SK-N-SH (cell line): ENCODE measurements at regions of chr10 and their contacts with region 1.

Region 1: DNA sequence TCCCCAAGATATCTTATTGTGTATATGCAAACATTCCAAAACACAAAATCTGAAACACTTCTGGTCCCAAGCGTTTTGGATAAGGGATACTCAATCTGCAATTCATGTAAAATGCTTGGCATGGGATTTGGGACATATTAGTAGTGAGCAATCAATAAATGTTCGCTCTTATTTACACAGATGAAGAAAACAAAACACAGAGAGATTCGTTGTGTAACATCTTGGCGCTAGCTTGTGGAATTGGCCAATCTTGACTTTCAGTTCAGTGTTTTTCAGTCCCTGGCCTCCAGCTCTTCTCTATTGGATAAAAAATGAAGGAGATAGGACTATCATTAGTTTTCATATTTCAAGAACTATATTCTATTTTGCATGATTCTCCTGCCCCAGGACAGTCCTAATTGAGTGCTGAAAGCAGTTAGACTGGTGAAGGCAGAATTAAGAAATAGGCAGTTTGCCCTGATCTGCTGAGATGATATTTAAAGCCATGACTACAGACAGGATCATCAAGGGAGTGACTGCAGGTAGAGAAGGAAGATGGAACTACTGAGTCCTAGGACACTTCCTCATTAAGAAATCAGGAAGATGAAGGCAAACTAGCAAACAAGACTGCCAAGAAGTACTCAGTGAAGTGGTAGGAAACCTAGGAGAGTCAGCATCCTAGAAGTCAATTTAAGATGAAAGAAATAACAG is 1.8 kb downstream of the PNLIPRP3 start:
- DNase-seq: no peak
- H3K4me3 ChIP-seq: no peak overlapping the region
- H3K27ac ChIP-seq: no peak overlapping the region
- H3K4me1 ChIP-seq: no peaks in the 10 kb centered on the region
- H3K27me3 ChIP-seq: no peaks in the 10 kb centered on the region
- CTCF ChIP-seq: no peak
- EP300 ChIP-seq: no peak
- RAD21 ChIP-seq: no peak

Region 2: DNA sequence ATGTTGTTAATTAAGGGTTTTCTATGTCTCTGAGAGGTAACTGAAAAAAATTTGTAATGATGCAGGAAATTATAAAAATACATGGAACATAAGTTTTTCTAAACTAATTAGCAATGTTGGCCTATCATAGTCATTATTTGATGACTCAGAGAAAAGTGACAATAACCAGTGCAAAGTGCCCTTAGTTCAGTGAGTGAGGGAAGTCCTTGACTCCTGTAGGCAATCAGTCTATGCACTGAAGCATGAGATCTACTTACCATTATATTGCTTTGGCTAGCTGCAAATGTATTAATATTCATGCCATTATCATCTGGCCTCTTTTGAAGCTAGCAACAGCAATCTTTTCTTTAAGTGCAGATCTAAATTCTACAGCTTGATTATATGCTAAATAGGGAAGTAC is 64.6 kb before region 1 on chr10:
- CTCF ChIA-PET with region 1: no interaction called
- POLR2A ChIA-PET with region 1: no interaction called
- DNase-seq: no peak
- H3K4me3 ChIP-seq: no peak overlapping the region
- H3K27ac ChIP-seq: no peak overlapping the region
- H3K4me1 ChIP-seq: no peaks in the 10 kb centered on the region
- H3K27me3 ChIP-seq: no peaks in the 10 kb centered on the region
- CTCF ChIP-seq: no peak
- EP300 ChIP-seq: no peak
- RAD21 ChIP-seq: no peak

Region 3: GRCh38 chr10:116444527-116445142 is 15.2 kb after region 1 on chr10:
- CTCF ChIA-PET with region 1: interaction called, 21 read pairs
- POLR2A ChIA-PET with region 1: no interaction called
- DNase-seq: peak; percentile 49
- H3K4me3 ChIP-seq: no peak overlapping the region; a peak in 1 of 4 replicates
- H3K27ac ChIP-seq: no peak overlapping the region
- H3K4me1 ChIP-seq: no peaks in the 10 kb centered on the region
- H3K27me3 ChIP-seq: no peaks in the 10 kb centered on the region
- CTCF ChIP-seq: peak; percentile 93
- EP300 ChIP-seq: no peak
- RAD21 ChIP-seq: peak; percentile 73

Region 4: DNA sequence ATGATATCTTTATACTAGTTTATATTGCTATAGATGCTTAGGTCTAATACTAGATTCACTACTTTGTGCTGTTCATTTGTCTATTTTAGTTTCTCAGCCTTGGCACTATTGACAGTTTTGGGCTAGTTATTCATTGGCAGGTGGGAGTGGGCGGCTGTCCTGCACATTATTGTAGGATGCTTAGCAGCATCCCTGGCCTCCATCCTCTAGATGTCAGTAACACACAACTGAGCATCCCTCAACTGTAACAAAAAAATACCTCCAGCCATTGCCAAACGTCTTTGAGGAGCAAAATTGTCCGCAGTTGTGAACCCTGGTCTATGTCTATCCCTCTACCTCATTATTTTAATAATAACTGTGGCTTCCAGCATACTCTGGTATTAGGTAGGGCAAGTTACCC is 81.9 kb after region 1 on chr10:
- CTCF ChIA-PET with region 1: no interaction called
- POLR2A ChIA-PET with region 1: no interaction called
- DNase-seq: no peak
- H3K4me3 ChIP-seq: no peak overlapping the region
- H3K27ac ChIP-seq: no peak overlapping the region
- H3K4me1 ChIP-seq: no peaks in the 10 kb centered on the region
- H3K27me3 ChIP-seq: no peaks in the 10 kb centered on the region
- CTCF ChIP-seq: no peak
- EP300 ChIP-seq: no peak
- RAD21 ChIP-seq: no peak